ENCODE measurements at regions of chr5 and their contacts with region 1.

Region 1: DNA sequence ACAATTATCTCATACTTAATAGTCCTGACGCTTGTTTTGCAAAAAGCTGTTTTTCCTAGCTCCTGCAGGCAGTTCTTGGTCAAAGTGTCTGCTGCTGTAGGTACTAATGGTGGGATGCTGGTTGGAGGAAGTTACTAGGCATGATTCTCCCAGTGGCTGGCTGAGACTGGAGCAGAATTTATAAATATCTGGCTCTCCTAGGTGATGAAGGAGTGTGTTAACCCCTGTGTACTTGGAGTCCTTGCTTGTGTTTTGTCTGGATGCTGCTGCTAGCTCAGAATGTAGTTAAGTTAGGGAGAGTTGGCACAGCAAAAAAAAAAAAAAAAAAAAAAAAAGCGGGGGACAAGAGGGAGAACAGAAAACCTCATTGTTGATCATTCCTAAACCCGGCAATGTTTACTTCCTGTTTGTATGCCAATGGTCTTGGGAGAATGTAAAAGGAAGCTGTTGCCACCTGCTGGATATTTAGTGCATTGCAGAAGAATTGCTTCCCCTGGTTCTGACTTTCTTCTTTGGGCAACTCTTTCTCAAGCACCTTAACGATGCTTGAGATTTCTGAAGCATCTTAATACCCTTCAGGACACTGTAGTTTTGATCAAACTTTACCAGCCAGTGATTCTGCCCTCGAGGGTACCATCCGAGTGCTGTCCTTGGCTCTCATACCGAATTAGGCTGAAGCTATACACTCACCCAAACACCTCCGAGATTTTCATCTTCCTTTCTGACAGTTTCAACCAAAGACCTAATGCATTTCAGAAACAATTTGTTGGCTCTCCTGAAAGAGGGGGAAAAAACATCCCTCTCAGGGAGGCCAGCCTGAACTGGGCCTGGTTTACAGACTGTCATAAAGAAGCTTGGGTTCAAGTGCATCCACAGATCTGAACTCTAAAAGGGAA is 71.7 kb upstream of the WWC1 start:
- DNase-seq: peak; percentile 51 to 71
- H3K4me3 ChIP-seq: no peak overlapping the region
- H3K27ac ChIP-seq: peak overlapping the region; percentile 62
- H3K4me1 ChIP-seq: peaks cover 6 to 21% (median 13%) of the 10 kb centered on the region in 4 experiments
- H3K27me3 ChIP-seq: no peaks in the 10 kb centered on the region
- CTCF ChIP-seq: peak in 2 of 3 experiments; percentile 88 to 90; a peak in 3 of 4 replicates
- EP300 ChIP-seq: no peak
- POLR2A ChIP-seq: no peak
- RAD21 ChIP-seq: peak; percentile 95 to 97

Region 2: DNA sequence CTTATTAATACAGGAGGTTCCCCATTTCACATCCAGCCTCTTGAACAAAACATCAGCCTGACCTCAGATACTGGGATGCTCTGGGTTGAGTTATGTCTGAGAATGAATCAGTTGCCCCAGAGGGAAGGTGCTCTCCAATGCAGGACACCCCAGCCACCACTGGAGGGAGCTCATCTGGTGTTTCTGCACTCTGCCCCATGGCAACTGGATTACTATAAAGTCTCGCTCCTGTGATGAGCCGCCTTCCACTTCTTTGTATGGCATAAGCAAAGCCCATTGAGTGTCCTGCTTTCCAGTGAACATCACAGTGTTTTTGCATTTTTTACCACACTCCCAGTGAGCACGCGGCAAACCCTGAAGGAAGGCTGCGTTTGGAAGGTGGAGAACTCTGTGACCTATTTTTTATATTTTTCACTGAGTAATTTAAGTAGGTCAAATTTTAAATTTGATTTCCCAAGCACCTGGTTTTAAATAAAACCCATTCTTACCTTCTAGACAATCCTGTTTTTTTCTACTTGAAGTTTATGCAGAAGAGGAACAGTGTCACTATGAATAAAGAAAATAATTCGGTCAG is 105.2 kb before region 1 on chr5:
- CTCF ChIA-PET with region 1: interaction called, 192 read pairs
- POLR2A ChIA-PET with region 1: no interaction called
- DNase-seq: peak; percentile 43 to 92
- H3K4me3 ChIP-seq: no peak overlapping the region
- H3K27ac ChIP-seq: no peak overlapping the region
- H3K4me1 ChIP-seq: peaks cover 3 to 9% (median 3%) of the 10 kb centered on the region in 4 experiments; a peak in 6 of 7 replicates
- H3K27me3 ChIP-seq: no peaks in the 10 kb centered on the region
- CTCF ChIP-seq: peak; percentile 88 to 98 (median 98)
- EP300 ChIP-seq: no peak
- POLR2A ChIP-seq: no peak
- RAD21 ChIP-seq: peak; percentile 87 to 90

Region 3: DNA sequence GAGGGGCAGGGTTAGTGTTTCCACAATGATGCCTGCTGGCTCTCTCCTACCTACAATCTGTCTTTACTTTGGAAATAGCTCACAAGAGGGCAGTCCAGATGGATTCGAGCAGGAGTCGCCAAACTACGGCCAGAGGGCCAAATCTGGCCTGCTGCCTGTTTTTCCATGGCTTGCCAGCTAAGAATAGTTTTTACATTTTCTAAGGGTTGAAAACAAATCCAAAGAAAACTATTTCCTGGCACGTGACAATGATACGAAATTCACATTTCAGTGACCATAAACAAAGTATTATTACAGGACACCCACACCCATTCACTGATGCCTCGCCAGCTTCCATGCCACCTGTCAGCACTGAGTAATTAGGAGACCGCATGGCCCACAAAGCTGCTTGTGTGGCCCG is 91.2 kb before region 1 on chr5:
- CTCF ChIA-PET with region 1: interaction called, 19 read pairs
- POLR2A ChIA-PET with region 1: no interaction called
- DNase-seq: no peak
- H3K4me3 ChIP-seq: no peak overlapping the region
- H3K27ac ChIP-seq: no peak overlapping the region
- H3K4me1 ChIP-seq: peaks cover 0 to 6% (median 2%) of the 10 kb centered on the region in 4 experiments; a peak in 1 of 7 replicates
- H3K27me3 ChIP-seq: no peaks in the 10 kb centered on the region
- CTCF ChIP-seq: no peak
- EP300 ChIP-seq: no peak
- POLR2A ChIP-seq: no peak
- RAD21 ChIP-seq: no peak

Region 4: DNA sequence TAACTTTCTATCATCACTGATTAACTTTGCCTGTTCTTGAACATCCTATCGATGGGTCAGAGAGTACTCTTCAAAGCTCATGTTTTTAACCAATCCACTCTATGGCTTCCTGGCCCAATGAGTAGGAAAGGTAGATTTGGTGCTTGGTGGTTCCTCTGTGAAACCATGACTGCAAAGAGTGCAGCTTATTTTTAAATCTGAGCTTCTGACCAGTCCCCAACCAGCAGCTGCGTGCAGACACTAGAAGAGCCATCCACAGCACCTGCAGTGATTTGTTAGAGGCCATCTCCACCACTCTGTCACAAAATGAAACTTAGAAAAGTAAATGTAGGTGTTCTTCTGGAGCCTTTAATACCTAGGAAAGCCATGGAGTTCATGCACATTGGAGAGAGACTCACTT is 35.7 kb before region 1 on chr5:
- CTCF ChIA-PET with region 1: interaction called, 11 read pairs
- POLR2A ChIA-PET with region 1: no interaction called
- DNase-seq: no peak
- H3K4me3 ChIP-seq: no peak overlapping the region
- H3K27ac ChIP-seq: no peak overlapping the region
- H3K4me1 ChIP-seq: no peaks in the 10 kb centered on the region
- H3K27me3 ChIP-seq: no peaks in the 10 kb centered on the region
- CTCF ChIP-seq: no peak
- EP300 ChIP-seq: no peak
- POLR2A ChIP-seq: no peak
- RAD21 ChIP-seq: no peak

Region 5: DNA sequence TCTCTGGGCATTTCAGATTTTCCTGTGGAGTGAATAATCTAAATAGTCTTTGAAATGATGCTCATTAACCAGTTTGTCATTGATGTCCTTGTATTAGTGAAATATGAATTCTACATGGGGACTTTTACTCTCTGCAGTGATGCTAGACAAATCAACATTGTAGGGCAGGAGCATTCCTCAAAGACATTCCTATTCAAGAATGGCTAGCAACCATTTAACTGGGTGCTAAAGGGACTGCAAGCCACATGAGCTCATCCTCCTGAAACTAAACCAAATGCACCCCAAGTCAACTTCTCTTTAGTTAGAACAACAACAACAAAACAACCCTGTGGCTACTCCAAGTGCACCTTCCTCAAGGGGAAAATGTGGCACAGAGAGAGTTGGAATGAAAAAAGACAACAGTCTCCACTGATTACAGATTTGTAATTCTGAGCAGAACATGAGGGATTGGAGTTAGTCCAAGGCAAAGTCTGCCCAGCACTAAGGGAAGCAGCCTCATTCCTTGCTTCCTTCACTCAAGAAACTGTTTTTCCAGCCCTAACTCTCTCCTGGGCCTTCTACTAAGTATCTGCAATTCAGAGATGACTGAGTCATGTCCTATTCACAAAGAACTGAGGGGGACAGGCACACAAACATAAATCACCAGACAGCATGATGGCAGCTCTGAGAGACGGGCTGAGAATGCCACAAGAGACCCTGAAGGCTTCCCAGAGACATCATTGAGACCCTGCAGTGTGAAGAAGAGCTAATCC is 10.3 kb before region 1 on chr5:
- CTCF ChIA-PET with region 1: interaction called, 15 read pairs
- POLR2A ChIA-PET with region 1: no interaction called
- DNase-seq: no peak
- H3K4me3 ChIP-seq: no peak overlapping the region
- H3K27ac ChIP-seq: no peak overlapping the region
- H3K4me1 ChIP-seq: peaks cover 0 to 4% (median 0%) of the 10 kb centered on the region in 4 experiments; a peak in 1 of 7 replicates
- H3K27me3 ChIP-seq: no peaks in the 10 kb centered on the region
- CTCF ChIP-seq: no peak
- EP300 ChIP-seq: no peak
- POLR2A ChIP-seq: no peak
- RAD21 ChIP-seq: no peak